HepG2 (cell line): ENCODE measurements at regions of chrX and their contacts with region 1.

Region 1: GRCh38 chrX:154490414-154491083 is at the start of gene SLC10A3:
- DNase-seq: peak; percentile 87
- ATAC-seq: peak; percentile 92
- H3K4me3 ChIP-seq: peak within 1 kb of the TSS; percentile 68 to 78 (median 72)
- H3K27ac ChIP-seq: peak within 1 kb of the TSS; percentile 73
- H3K4me1 ChIP-seq: peaks cover 12% of the 10 kb centered on the region
- H3K27me3 ChIP-seq: no peaks in the 10 kb centered on the region
- CTCF ChIP-seq: peak; percentile 59
- EP300 ChIP-seq: no peak
- POLR2A ChIP-seq: peak in 1 of 2 experiments; percentile 70; a peak in 2 of 4 replicates
- RAD21 ChIP-seq: no peak
- total RNA-seq, gene SLC10A3: 10.1 and 10.8 TPM in 2 replicates

Region 2: GRCh38 chrX:154526901-154527675 is 36.5 kb after region 1 on chrX:
- CTCF ChIA-PET with region 1: no interaction called
- POLR2A ChIA-PET with region 1: interaction called, 10 read pairs
- in situ Hi-C with region 1: no loop called
- intact Hi-C with region 1: no loop called
- DNase-seq: peak; percentile 56
- ATAC-seq: peak; percentile 78
- H3K4me3 ChIP-seq: peak overlapping the region; percentile 37 to 63 (median 40); a peak in 5 of 6 replicates
- H3K27ac ChIP-seq: peak overlapping the region; percentile 63
- H3K4me1 ChIP-seq: peaks cover 62% of the 10 kb centered on the region
- H3K27me3 ChIP-seq: no peaks in the 10 kb centered on the region
- CTCF ChIP-seq: peak; percentile 68
- EP300 ChIP-seq: no peak
- POLR2A ChIP-seq: no peak
- RAD21 ChIP-seq: no peak

Region 3: DNA sequence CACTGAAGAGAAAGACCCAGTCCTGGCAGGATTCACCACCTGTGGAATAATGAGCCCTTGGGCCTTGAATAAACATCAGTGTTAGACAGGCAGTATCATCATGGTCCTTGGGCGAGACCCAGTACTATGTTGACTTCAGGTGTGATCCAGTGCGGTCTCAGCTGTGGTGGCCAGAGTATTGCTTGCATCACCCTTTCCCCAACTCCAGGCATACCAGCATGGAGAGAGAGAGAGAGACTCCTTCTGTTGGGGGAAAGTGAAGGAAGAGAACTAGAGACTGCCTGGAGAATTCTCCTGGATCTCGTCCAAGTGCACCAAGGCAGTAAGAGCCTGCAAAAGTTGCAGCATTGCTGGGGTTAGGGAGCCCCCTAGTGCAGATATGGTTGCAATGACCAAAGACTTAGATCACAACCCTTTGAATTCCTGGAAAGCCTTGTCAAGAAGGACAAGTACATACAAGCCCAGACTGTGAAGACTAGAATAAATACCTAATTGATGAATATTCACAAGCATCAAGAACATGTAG is 1329.5 kb after region 1 on chrX:
- CTCF ChIA-PET with region 1: no interaction called
- POLR2A ChIA-PET with region 1: no interaction called
- in situ Hi-C with region 1: no loop called
- intact Hi-C with region 1: no loop called
- DNase-seq: peak; percentile 49
- ATAC-seq: peak; percentile 75
- H3K4me3 ChIP-seq: no peak overlapping the region
- H3K27ac ChIP-seq: no peak overlapping the region
- H3K4me1 ChIP-seq: no peaks in the 10 kb centered on the region
- H3K27me3 ChIP-seq: no peaks in the 10 kb centered on the region
- CTCF ChIP-seq: peak; percentile 73
- EP300 ChIP-seq: no peak
- POLR2A ChIP-seq: no peak
- RAD21 ChIP-seq: no peak; the same call in 1 of the 2 replicates